ENCODE measurements at regions of chr22 and their contacts with region 1.

Region 1: DNA sequence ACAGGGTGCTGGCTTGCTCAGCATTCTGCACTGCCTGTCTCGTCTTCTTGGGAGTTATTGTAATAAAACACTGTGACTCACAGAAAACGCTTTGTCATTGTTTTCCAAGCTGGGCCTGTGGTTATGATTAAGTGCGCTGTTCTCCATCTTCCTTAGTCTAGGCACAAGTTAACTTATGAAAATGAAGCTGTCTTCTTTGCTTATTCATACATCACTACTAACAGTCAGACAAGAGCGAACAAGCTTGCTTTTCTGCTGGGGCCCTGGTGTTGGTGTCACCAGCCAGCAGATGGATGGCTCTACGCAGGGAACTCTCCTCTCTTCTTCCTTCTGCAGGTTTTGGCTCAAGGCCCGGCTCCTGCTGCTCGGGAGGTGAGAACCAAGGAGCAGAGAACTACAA is 380.1 kb upstream of the SYN3 start:
- DNase-seq: no peak
- H3K4me3 ChIP-seq: no peak overlapping the region
- H3K27ac ChIP-seq: peak overlapping the region in 2 of 4 donors; percentile 17 to 25
- H3K4me1 ChIP-seq: peaks cover 0 to 17% (median 0%) of the 10 kb centered on the region in 3 donors
- H3K27me3 ChIP-seq: no peaks in the 10 kb centered on the region
- CTCF ChIP-seq: no peak
- POLR2A ChIP-seq: no peak

Region 2: GRCh38 chr22:33163815-33164214 is 274.5 kb before region 1 on chr22:
- intact Hi-C with region 1: no loop called
- DNase-seq: no peak
- H3K4me3 ChIP-seq: no peak overlapping the region
- H3K27ac ChIP-seq: no peak overlapping the region
- H3K4me1 ChIP-seq: no peaks in the 10 kb centered on the region
- H3K27me3 ChIP-seq: no peaks in the 10 kb centered on the region
- CTCF ChIP-seq: no peak
- POLR2A ChIP-seq: no peak

Region 3: GRCh38 chr22:33379836-33380235 is 58.4 kb before region 1 on chr22:
- intact Hi-C with region 1: loop called (anchors 10 kb)
- DNase-seq: no peak
- H3K4me3 ChIP-seq: no peak overlapping the region
- H3K27ac ChIP-seq: no peak overlapping the region
- H3K4me1 ChIP-seq: no peaks in the 10 kb centered on the region
- H3K27me3 ChIP-seq: no peaks in the 10 kb centered on the region
- CTCF ChIP-seq: no peak
- POLR2A ChIP-seq: no peak

Measured in esophagus squamous epithelium (tissue), 5 donors.